ENCODE measurements at regions of chrX and their contacts with region 1.

Region 1: DNA sequence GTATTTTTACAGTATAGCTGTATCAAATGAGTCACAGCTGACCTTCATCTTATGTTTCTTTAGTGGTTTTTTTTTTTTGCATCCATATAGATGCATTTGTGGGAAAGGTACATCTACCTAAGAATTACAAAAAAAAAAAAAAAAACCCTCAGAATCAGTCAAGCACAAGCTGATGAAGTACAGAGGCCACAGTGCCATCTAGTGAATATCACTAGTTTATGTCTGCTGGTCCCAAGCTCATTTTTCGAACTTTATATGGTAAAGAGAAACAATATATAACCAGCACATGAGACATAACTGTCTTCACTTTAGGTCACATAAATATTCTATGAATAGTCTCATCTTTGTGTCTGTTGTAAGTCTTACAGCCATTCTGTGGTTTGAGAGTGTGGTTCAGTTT is 220.1 kb downstream of the DLG3 start:
- DNase-seq: peak; percentile 9
- H3K4me3 ChIP-seq: no peak overlapping the region
- H3K27ac ChIP-seq: no peak overlapping the region
- H3K4me1 ChIP-seq: no peaks in the 10 kb centered on the region
- H3K27me3 ChIP-seq: peaks cover 3% of the 10 kb centered on the region
- CTCF ChIP-seq: peak; percentile 9 to 47

Region 2: DNA sequence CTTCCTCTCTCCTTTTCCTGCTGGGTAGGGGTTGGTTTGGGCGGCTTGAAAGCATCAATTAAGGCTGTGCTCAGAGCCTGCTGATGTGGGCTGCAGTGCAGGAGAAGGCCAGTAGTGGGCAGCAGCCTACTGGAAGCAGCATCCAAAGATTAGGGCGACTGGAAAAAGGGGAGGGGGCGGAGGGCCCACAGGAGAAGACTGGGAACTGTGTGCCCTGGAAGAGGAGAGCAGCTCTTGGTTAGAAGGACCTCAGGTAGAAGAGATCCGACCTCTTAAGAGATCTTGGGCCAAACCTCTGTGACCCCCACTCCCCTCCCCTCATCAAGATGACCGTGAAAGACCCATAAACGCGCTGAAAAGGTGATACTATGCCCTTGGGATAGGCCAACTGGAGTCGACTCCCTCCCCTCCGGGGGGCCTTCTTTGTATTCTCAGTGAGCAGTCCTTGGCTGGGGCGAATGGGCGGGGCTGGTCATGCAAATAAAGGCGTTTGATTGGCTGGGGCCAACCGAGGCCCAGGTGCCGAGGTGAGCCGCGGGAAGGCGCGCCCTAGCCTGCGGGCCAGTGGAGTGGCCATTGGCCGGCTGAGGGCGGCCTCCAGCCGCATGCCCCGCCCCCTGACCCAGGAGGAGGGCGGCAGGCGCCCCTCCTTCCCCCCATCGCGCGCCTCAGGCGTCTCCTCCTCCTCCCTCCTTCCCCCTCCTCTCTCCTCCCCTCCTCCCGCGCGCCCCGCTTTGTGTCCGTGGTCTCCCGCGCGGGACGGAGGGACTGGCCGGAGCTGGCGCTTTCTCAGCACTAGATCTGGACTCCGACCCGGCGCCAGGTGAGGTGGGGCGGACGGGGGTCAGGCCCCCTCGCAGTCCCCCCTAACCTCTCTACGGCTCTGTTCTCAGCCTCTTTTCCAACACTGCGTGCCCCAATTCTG is 210.0 kb before region 1 on chrX:
- CTCF ChIA-PET with region 1: no interaction called
- dilution Hi-C with region 1: no loop called
- in situ Hi-C with region 1: loop called (anchors 25 kb)
- intact Hi-C with region 1: no loop called
- DNase-seq: peak; percentile 77
- H3K4me3 ChIP-seq: peak overlapping the region; percentile 47 to 63 (median 58)
- H3K27ac ChIP-seq: no peak overlapping the region
- H3K4me1 ChIP-seq: peaks cover 12% of the 10 kb centered on the region
- H3K27me3 ChIP-seq: no peaks in the 10 kb centered on the region
- CTCF ChIP-seq: peak; percentile 87 to 89

Region 3: GRCh38 chrX:70479247-70479921 is 185.3 kb before region 1 on chrX:
- CTCF ChIA-PET with region 1: interaction called, 12 read pairs
- dilution Hi-C with region 1: no loop called
- in situ Hi-C with region 1: loop called (anchors 25 kb)
- intact Hi-C with region 1: no loop called
- DNase-seq: peak; percentile 60
- H3K4me3 ChIP-seq: no peak overlapping the region
- H3K27ac ChIP-seq: peak overlapping the region; percentile 14
- H3K4me1 ChIP-seq: peaks cover 18% of the 10 kb centered on the region
- H3K27me3 ChIP-seq: no peaks in the 10 kb centered on the region
- CTCF ChIP-seq: no peak

Region 4: DNA sequence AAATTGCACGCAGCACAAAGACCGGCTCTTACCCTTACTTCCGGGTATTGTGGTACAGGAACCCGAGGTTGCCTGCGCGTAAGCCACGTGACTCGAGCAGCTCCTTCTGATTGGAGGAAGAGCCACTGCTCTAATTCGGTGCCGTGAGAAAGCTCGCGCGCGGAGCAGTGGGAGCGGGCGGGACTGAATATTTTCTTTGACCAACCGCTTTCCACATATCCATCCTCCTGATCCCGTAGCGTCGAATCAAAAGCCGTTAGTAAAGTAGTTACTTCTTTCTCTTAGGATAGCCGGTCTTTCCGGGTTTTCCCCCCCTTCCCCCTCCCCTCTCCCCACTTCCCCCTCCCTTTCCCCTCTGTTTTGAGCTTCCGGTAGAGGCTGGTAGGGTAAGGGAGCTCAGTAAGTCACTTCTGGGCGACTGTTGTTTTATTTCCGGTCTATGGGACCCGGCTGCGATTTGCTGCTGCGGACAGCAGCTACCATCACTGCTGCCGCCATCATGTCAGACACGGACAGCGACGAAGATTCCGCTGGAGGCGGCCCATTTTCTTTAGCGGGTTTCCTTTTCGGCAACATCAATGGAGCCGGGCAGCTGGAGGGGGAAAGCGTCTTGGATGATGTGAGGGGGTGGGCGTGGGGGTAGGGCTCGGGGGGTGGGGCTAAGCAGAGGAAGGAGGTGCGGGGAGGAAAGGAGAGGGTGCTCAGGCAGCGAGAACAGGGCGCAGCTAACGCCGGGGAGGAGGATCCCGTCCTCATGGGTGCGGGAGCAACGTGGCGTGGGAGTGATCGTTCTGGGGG is 701.3 kb after region 1 on chrX and contains the start of gene TAF1:
- CTCF ChIA-PET with region 1: no interaction called
- dilution Hi-C with region 1: no loop called
- in situ Hi-C with region 1: no loop called
- intact Hi-C with region 1: no loop called
- DNase-seq: peak; percentile 95
- H3K4me3 ChIP-seq: peak within 1 kb of the TSS; percentile 64 to 76 (median 64)
- H3K27ac ChIP-seq: peak within 1 kb of the TSS; percentile 87
- H3K4me1 ChIP-seq: no peaks in the 10 kb centered on the region
- H3K27me3 ChIP-seq: no peaks in the 10 kb centered on the region
- CTCF ChIP-seq: no peak
- total RNA-seq, gene TAF1: 19.0 to 35.6 TPM